ENCODE measurements at regions of chr3 and their contacts with region 1.

Region 1: DNA sequence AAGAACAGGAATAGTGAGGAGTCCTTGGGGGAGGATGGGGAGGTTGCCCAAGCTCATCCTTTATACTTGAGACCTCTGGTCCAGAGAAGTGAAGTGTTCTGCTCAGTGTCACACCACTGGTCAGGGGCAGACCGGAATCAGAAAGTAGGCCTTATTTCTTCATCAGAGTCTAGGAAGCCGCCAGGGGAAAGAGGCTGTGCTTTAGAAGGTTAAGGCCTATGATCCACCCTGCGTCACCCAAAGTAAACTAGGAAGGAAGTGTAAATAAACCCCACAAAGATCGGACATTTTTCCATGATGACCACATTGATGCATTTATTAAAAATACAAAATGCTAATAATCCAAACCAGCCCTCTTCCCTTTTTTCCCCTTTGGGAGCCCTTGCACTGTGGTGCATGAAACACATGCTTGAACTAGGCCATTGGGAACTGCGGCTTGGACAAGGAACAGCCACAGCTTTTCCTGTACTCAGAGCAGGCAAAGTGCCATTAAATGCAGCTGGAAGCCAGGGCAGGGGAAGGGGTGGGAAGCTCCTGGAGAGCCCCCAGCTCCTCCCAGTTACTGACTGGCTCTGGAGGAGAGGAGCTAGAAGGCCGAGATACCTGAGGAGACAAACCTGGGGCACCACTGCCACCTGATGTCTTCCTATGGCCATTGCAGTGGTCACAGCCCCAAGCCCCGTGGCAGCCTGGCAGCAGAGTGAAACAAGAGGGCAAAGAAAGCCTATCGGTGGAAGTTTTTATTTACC is 37.0 kb downstream of the CDC25A start:
- DNase-seq: peak; percentile 70 to 80 (median 80)
- ATAC-seq: peak; percentile 97
- H3K4me3 ChIP-seq: no peak overlapping the region
- H3K4me1 ChIP-seq: no peaks in the 10 kb centered on the region
- CTCF ChIP-seq: peak; percentile 60

Region 2: DNA sequence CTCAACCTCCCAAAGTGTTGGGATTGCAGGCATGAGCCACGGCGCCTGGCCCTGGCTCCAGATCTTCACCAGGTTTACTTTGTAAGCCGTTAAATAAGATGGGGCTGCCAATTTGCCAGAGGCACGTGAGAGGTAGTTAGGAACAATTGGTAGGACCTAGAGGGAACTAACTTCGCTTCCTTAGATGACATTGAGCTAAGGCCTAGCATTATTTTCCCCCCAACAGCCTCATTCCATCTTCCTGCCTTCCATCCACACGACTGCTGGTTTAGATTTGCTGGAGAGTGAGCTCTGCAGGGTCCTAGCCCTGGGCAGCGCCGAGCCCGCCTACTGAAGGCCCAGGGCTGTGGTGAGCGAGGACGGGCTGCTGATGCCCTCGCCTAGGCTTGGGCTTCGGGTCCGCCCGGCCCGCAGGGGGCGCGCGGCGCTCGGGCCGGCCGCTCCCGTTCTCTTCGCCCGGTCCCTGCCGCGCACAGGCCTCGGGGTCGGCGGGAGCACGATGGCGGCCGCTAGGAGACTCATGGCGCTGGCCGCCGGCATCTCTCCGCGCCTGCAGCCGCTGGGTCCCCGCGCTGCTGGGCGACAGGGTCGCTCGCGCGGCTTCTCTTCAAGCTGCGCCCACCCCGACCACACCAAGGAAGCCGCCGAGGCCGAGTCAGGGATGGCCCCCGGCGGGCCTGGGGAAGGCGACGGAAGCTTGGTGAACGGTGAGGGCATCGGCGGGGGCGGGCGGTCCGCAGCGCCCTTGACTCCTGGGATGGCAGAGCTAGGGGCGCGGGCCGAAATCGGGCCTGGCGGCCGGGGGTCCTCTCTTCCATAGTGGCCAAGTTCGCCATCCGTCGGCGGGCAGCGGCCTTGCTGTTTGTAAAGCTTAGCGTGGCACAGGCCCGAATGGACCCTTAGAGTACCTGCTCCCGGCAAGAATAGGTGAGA is 326.4 kb before region 1 on chr3:
- intact Hi-C with region 1: loop called in 1 of 2 experiments (anchors 10 kb)
- DNase-seq: peak; percentile 79 to 87 (median 80)
- ATAC-seq: peak; percentile 100
- H3K4me3 ChIP-seq: peak overlapping the region; percentile 89
- H3K4me1 ChIP-seq: peaks cover 16% of the 10 kb centered on the region
- CTCF ChIP-seq: peak; percentile 82

Region 3: DNA sequence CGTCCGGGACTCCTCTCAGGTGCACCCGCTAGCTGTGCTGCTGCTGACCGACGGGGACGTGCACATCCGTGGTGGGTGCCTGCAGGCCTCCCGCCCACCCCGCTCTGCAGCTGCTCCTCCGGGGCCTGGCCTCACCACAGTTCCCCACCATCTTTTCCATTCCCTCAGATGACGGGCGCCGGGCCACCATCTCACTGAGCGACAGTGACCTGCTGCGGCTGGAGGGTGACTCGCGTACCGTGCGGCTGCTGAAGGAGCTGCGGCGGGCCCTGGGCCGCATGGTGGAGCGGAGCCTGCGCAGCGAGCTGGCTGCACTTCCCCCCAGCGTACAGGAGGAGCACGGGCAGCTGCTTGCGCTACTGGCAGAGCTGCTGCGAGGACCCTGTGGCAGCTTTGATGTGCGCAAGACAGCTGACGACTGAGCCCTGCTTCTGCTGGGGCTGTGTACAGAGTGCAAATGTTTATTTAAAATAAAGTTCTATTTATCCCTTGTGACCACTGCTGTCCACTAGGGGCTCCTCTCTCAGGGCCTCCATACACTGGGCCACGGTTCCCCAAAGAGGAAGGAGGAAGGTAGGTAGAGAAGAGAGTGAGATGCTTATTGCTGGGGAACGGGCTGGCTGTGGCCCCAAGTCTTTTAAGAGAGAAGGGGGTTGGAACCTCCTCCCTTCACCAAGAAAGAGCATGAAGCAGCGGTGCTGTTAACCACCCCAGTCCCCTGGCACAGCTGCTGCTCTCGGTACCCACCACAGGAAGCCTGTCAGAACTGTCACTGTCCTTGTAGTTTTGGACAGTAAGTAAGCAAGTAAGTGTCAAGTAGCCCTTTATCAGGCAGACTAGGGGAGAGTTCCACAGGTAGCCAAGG is 301.3 kb before region 1 on chr3:
- intact Hi-C with region 1: loop called in 1 of 2 experiments (anchors 10 kb)
- DNase-seq: peak in 1 of 3 donors; percentile 19
- ATAC-seq: peak; percentile 37
- H3K4me3 ChIP-seq: no peak overlapping the region
- H3K4me1 ChIP-seq: no peaks in the 10 kb centered on the region
- CTCF ChIP-seq: no peak

Measured in mucosa of descending colon (tissue), 3 donors.